Aorta (tissue), 5 donors: ENCODE measurements at regions of chr3 and their contacts with region 1.

Region 1: GRCh38 chr3:65483480-65483879 is 555.2 kb downstream of the MAGI1 start:
- DNase-seq: peak; percentile 49 to 77
- ATAC-seq: peak; percentile 84
- H3K4me3 ChIP-seq: no peak overlapping the region
- H3K27ac ChIP-seq: no peak overlapping the region
- H3K4me1 ChIP-seq: peaks cover 13 to 21% of the 10 kb centered on the region in 2 donors
- H3K27me3 ChIP-seq: no peaks in the 10 kb centered on the region

Region 2: GRCh38 chr3:65422154-65422553 is 61.3 kb before region 1 on chr3:
- intact Hi-C with region 1: no loop called
- DNase-seq: no peak
- ATAC-seq: no peak
- H3K4me3 ChIP-seq: no peak overlapping the region
- H3K27ac ChIP-seq: no peak overlapping the region
- H3K4me1 ChIP-seq: no peaks in the 10 kb centered on the region
- H3K27me3 ChIP-seq: no peaks in the 10 kb centered on the region

Region 3: GRCh38 chr3:65436580-65436979 is 46.9 kb before region 1 on chr3:
- intact Hi-C with region 1: no loop called
- DNase-seq: no peak
- ATAC-seq: no peak
- H3K4me3 ChIP-seq: no peak overlapping the region
- H3K27ac ChIP-seq: no peak overlapping the region
- H3K4me1 ChIP-seq: no peaks in the 10 kb centered on the region
- H3K27me3 ChIP-seq: no peaks in the 10 kb centered on the region

Region 4: DNA sequence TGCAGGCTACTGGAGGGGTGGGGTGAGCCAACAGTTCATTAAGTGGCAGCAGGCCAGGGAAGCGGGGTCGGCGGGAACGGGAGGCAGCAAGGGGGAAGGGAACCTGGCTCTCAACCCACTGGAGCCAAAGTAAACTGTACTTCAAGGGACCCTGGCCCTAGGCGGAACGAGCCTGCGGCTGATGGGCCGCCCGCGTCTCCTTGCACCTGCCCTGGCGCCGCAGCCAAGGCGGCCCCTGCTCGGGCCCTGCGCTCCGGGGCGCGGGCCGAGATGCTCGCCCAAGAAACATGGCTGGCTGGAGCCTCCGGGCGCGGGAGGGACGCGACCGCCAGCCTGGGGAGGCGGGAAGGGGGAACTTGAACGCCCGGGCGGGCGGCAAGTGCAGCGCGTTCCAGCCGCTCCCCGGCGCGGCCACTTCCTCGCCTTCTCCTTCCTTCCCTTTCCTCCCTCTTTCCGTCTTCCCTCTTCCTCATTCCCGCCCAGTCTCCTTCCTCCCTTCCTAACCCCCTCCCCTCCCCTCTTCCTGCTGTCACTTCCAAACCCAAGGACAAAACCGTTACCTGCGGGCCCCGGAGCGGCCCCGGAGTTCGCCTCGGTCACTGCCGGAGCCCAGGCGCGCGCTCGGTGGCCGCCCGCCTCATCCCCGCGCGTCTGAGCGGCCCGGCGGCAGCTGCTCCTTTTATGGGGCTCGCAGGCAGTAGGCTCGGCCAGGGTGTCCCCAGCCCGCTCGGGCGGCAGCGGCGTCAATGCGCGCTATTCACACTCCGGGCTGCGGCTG is 65.6 kb after region 1 on chr3:
- intact Hi-C with region 1: loop called in 1 of 2 experiments (anchors 10 kb)
- DNase-seq: peak; percentile 45 to 85
- ATAC-seq: peak; percentile 78
- H3K4me3 ChIP-seq: peak overlapping the region; percentile 46 to 48
- H3K27ac ChIP-seq: no peak overlapping the region
- H3K4me1 ChIP-seq: peaks cover 0 to 2% of the 10 kb centered on the region in 2 donors
- H3K27me3 ChIP-seq: no peaks in the 10 kb centered on the region